ENCODE measurements at regions of chr1 and their contacts with region 1.

Region 1: DNA sequence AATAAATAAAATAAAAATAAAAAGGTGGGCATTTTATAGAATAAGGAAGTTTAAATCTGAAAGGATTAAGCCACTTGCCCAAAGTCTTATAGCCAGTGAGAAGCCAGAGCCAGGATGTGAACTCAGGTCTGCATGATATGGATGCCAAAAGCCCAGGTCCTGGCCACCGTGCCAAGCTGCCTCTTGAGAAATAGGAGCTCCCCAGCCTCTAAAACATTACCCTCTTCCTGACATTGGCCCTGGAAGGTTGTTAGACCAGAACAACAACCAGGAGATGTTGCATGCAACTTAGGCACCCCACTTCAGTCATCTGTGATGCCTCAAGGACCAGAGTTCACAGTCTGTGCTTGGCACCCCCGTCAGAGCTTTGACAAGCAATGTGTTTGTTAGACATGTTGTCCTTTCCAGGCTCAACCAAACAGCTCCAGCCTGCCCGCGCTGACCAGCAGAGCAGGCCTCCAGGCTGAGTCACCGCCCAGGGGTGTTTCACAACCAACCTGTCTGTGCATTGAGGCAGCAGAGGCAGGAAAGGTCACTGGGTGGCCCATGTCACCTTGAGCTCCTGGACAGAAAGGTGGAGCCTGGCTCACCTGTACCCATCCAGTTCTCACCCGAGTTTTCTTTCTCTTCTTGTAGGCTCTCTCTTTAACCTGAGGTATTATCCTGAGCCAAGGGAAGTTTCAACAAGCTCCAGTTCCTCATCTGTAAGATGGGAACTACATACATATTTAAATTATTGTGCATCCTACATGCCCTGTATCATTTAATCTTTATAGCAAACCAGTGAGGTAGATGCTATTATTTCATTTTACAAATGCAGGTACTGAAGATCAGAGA is 14.9 kb upstream of the MED18 start:
- DNase-seq: peak; percentile 85
- H3K4me3 Mint-ChIP-seq: peak overlapping the region; percentile 30
- H3K27ac Mint-ChIP-seq: peak overlapping the region; percentile 66
- H3K4me1 Mint-ChIP-seq: peaks cover 12% of the 10 kb centered on the region
- H3K27me3 Mint-ChIP-seq: no peaks in the 10 kb centered on the region
- CTCF ChIP-seq: no peak

Region 2: DNA sequence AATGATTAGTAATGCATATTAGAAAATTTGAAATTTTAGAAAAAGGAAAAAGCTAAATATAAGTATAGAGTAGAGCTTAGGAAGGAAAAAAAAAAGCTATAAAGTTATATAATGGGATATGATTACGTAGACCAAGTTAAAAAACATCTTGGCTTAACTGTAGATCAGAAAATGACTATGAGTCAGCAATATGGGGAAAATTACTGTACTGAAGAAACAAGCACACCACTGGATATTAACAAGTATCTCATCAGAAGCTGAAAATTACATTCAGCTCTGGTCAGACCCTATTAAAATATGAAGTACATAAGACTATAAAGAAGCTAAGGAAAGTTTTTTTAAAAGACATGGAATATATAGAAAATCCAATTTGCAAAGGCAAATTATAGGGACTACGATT is 100.6 kb before region 1 on chr1:
- CTCF ChIA-PET with region 1: no interaction called
- intact Hi-C with region 1: no loop called
- DNase-seq: no peak
- H3K4me3 Mint-ChIP-seq: no peak overlapping the region
- H3K27ac Mint-ChIP-seq: no peak overlapping the region
- H3K4me1 Mint-ChIP-seq: no peaks in the 10 kb centered on the region
- H3K27me3 Mint-ChIP-seq: no peaks in the 10 kb centered on the region
- CTCF ChIP-seq: no peak

Region 3: GRCh38 chr1:28369371-28370238 is 55.7 kb after region 1 on chr1 and contains the start of gene PHACTR4:
- CTCF ChIA-PET with region 1: interaction called, 12 read pairs
- intact Hi-C with region 1: no loop called
- DNase-seq: peak; percentile 96
- H3K4me3 Mint-ChIP-seq: peak within 1 kb of the TSS; percentile 90
- H3K27ac Mint-ChIP-seq: peak within 1 kb of the TSS; percentile 88
- H3K4me1 Mint-ChIP-seq: peaks cover 30% of the 10 kb centered on the region
- H3K27me3 Mint-ChIP-seq: no peaks in the 10 kb centered on the region
- CTCF ChIP-seq: no peak
- total RNA-seq, gene PHACTR4: 58.0 and 58.7 TPM in 2 replicates

Measured in Calu3 (cell line).